Right ventricle myocardium inferior (tissue), 1 donor: ENCODE measurements at regions of chr19 and their contacts with region 1.

Region 1: GRCh38 chr19:10762656-10763055 is 44.8 kb downstream of the DNM2 start:
- DNase-seq: no peak
- ATAC-seq: no peak

Region 2: GRCh38 chr19:10518444-10519361 is 244.0 kb before region 1 on chr19:
- intact Hi-C with region 1: no loop called
- DNase-seq: no peak
- ATAC-seq: peak; percentile 9

Region 3: GRCh38 chr19:10748924-10749434 is 13.7 kb before region 1 on chr19:
- intact Hi-C with region 1: loop called (anchors 2 kb)
- DNase-seq: no peak
- ATAC-seq: peak; percentile 32

Region 4: DNA sequence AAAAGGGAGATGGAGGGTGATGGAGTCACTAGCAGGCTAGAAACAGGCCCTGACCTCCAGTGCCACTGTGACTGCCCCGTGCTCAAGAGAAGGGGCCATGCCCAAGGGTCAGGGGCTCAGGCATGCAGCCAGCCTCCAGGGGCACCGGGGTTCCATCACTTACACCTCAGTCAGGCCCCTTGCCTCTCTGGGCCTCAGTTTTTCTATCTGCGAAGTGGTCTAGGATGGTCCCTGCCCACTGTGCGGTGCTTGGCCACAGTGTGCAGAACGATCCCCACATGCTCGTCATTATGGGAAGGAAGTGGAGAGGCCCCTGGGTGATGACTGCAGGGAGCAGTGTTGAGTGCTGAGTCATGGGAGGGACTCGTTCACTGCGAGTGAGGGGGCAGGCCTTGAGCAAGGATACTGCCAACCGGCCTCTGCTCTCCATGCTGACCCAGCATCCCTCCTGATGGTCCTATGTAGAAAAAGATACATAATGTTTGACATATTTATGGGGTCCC is 50.3 kb after region 1 on chr19:
- intact Hi-C with region 1: no loop called
- DNase-seq: peak; percentile 70
- ATAC-seq: peak; percentile 48

Region 5: DNA sequence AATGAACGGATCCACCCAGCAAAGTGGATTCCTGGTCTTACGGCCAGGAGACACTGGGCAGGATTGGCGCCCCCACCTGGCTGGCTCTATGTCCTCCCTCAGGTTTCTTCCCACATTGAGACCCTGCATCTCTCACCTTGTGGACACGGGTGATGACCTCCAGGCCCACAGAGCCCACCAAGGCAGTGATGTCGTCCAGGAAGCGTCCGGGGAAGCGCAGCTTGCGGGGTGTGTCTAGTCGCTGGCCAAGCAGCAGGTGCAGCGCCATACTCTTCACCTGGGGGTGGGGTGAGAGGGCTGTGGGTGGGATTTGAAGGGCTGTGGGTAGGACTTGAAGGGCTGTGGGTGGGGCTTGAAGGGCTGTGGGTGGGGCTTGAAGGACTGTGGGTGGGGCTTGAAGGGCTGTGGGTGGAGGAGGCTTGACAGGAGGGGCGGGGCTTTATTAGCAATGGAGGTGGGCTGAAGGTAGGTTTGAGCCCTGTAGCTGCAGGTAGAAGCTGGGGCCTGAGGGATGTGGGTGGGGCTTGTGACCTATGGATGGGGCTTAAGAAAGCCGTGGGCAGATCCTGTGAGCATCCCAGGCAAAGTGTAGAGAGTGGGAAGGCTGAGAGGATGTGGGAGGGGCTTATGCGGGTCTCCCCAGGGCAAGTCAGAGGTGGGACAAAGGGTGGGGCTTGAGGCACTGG is 464.7 kb after region 1 on chr19:
- intact Hi-C with region 1: no loop called
- DNase-seq: no peak
- ATAC-seq: no peak